ENCODE measurements at regions of chr5 and their contacts with region 1.

Region 1: DNA sequence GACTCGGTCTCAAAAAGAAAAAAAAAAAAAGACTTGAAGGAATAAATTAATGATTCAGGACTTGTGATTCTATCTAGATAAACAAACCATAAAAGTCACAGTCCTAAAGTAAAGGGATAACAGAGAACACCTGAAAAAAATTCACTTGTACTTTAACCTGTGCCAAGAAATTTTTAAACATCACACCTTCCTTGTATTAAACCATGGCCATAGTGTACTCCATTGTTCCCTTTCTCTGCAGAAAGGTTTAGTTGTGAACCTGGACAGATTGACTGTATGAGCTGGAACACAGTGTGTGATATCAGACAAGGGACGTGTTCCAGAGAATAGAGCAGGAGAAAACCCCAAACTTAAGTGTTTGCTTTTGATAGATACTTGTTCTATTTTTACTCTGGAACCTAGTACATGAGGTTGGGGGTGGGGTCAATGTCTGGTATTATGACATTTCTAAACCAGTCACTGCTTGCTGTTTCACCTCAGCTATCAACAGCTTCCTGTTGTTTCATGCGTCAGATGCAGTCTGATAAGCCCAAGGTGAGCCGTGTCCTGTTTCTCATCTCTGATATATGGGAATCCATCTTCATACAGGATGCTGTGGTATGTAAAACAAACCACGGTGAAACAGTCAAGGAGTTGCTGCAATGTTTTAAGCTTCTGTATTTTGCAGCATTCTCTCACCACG is 62.5 kb upstream of the ITGA1 start:
- DNase-seq: peak; percentile 71
- H3K4me3 Mint-ChIP-seq: no peak overlapping the region
- H3K27ac Mint-ChIP-seq: peak overlapping the region; percentile 75
- H3K4me1 Mint-ChIP-seq: peaks cover 39% of the 10 kb centered on the region
- H3K27me3 Mint-ChIP-seq: no peaks in the 10 kb centered on the region

Region 2: DNA sequence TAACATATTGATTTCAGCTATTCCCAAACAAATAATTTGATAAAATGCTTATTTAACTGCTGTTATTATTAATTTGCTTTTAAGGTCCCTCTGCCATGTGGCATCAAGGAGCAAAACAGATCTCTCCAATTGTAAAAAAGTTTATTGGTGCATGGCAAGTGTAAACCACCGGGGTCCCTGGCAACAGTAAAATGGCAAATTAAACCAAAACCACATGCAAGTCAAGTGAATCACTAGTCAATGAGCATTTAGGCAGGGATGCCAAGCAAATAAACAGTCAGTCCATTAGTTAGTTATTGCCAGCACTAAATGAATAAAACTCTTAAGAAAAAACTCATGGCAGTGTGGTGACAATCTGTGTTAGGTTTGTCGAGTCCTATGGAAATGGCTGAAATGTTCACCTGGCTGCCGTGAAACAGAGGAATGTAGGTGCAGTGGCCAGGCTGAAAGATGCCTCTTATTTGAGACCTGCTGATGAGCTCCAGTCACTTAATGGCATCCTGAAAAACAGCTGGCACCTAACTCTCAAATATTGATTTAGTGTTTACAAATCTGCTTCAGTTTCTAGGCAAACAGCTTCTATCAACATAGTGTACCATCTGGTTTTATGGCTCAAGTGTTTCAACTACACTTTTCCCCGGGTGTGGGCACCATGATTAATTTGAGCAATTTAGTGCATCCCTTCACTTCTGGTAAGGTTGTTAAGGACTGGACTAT is 234.0 kb before region 1 on chr5:
- CTCF ChIA-PET with region 1: no interaction called
- POLR2A ChIA-PET with region 1: no interaction called
- intact Hi-C with region 1: no loop called
- DNase-seq: no peak
- H3K4me3 Mint-ChIP-seq: no peak overlapping the region
- H3K27ac Mint-ChIP-seq: no peak overlapping the region
- H3K4me1 Mint-ChIP-seq: no peaks in the 10 kb centered on the region
- H3K27me3 Mint-ChIP-seq: no peaks in the 10 kb centered on the region

Region 3: DNA sequence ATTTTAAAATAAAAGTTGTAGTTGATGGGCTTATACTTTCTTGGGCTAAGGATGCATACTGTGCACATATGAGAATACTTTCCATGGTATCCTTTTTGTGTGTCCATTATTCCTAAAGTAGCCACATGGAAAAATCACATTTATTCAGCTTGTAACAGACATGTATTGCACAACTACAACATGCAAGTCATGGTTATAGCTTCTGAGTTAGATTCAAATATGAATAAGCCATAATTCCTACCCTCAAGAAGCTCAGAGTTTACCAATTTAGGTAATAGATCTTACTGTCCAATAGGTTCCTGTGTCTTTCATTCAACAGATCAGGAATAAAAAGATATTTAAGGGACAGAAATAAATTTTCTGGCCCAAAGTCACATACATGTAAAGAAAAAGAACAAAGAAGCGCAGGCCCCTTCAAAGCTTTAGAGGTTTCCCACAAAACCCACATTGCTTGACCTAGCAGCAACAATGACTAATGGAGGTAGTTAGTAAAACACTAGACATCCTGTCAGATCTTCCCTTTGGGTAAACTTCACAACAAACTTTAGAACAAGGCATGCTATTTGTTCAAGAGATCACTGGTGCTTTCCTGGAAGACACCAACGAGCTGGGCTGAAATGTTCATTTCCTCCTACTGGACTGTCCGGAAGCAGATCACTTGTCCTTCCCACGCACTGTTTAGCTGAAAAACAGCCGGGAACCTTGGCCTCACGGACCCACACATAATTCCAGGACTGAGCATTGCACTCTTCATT is 15.9 kb before region 1 on chr5:
- CTCF ChIA-PET with region 1: interaction called, 3 read pairs
- POLR2A ChIA-PET with region 1: no interaction called
- intact Hi-C with region 1: loop called (anchors 1 kb)
- DNase-seq: peak; percentile 31
- H3K4me3 Mint-ChIP-seq: no peak overlapping the region
- H3K27ac Mint-ChIP-seq: peak overlapping the region; percentile 35
- H3K4me1 Mint-ChIP-seq: peaks cover 36% of the 10 kb centered on the region
- H3K27me3 Mint-ChIP-seq: no peaks in the 10 kb centered on the region

Region 4: GRCh38 chr5:52771343-52772039 is 46.3 kb after region 1 on chr5:
- CTCF ChIA-PET with region 1: no interaction called
- POLR2A ChIA-PET with region 1: no interaction called
- intact Hi-C with region 1: loop called (anchors 1 kb)
- DNase-seq: peak; percentile 63
- H3K4me3 Mint-ChIP-seq: no peak overlapping the region
- H3K27ac Mint-ChIP-seq: no peak overlapping the region
- H3K4me1 Mint-ChIP-seq: peaks cover 43% of the 10 kb centered on the region
- H3K27me3 Mint-ChIP-seq: no peaks in the 10 kb centered on the region

Region 5: DNA sequence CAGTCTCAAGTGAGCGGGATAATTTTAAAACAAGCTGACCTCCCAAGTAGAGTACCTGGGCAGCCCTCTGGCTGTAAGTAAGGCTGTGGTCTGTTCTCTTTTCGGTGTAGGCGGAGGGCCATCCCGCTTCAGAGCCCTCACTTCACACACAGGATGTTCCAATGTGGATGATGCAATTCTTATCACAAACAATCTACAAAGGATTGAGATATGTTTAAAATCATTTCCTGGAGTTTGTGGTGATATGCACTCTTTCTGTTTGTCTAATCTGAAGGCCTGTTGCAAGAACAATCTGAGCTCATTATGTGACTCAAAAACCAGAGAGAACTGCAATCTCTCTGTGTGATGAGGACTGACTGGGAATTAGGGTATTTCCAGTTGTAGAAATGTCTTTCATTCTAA is 306.5 kb after region 1 on chr5:
- CTCF ChIA-PET with region 1: no interaction called
- POLR2A ChIA-PET with region 1: no interaction called
- intact Hi-C with region 1: no loop called
- DNase-seq: peak; percentile 68
- H3K4me3 Mint-ChIP-seq: no peak overlapping the region
- H3K27ac Mint-ChIP-seq: peak overlapping the region; percentile 78
- H3K4me1 Mint-ChIP-seq: peaks cover 38% of the 10 kb centered on the region
- H3K27me3 Mint-ChIP-seq: no peaks in the 10 kb centered on the region